ENCODE measurements at regions of chr16 and their contacts with region 1.

Region 1: DNA sequence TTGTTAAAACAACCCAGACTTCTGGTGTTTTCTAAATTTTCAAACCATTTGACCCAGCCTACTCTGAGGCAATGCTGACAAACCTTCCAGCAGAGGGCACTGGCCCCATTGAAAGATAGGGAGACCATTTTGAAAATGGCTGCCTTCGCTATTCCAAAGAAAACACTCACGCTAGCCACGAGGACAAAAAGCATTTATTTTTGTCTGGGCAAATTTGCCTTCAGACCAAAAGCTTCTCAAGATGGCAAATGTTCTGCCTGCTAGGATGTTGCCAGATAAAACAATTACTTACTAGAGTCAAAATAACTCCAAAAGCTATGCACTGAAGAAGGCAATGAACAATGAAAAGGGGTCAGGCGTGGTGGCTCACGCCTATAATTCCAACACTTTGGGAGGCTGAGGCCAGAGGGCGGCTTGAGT is 296.7 kb upstream of the IRX5 start:
- DNase-seq: peak; percentile 78
- H3K4me3 Mint-ChIP-seq: no peak overlapping the region
- H3K27ac Mint-ChIP-seq: no peak overlapping the region
- H3K4me1 Mint-ChIP-seq: peaks cover 8% of the 10 kb centered on the region
- H3K27me3 Mint-ChIP-seq: no peaks in the 10 kb centered on the region
- CTCF ChIP-seq: peak; percentile 76

Region 2: GRCh38 chr16:54812229-54812628 is 178.3 kb after region 1 on chr16:
- CTCF ChIA-PET with region 1: interaction called, 7 read pairs
- POLR2A ChIA-PET with region 1: no interaction called
- intact Hi-C with region 1: loop called (anchors 1 kb)
- DNase-seq: peak; percentile 27
- H3K4me3 Mint-ChIP-seq: no peak overlapping the region
- H3K27ac Mint-ChIP-seq: no peak overlapping the region
- H3K4me1 Mint-ChIP-seq: no peaks in the 10 kb centered on the region
- H3K27me3 Mint-ChIP-seq: no peaks in the 10 kb centered on the region
- CTCF ChIP-seq: no peak

Region 3: GRCh38 chr16:54817446-54817845 is 183.5 kb after region 1 on chr16:
- CTCF ChIA-PET with region 1: interaction called, 7 read pairs
- POLR2A ChIA-PET with region 1: no interaction called
- intact Hi-C with region 1: loop called (anchors 1 kb)
- DNase-seq: peak; percentile 69
- H3K4me3 Mint-ChIP-seq: no peak overlapping the region
- H3K27ac Mint-ChIP-seq: no peak overlapping the region
- H3K4me1 Mint-ChIP-seq: no peaks in the 10 kb centered on the region
- H3K27me3 Mint-ChIP-seq: no peaks in the 10 kb centered on the region
- CTCF ChIP-seq: peak; percentile 42